ENCODE measurements at regions of chr3 and their contacts with region 1.

Region 1: DNA sequence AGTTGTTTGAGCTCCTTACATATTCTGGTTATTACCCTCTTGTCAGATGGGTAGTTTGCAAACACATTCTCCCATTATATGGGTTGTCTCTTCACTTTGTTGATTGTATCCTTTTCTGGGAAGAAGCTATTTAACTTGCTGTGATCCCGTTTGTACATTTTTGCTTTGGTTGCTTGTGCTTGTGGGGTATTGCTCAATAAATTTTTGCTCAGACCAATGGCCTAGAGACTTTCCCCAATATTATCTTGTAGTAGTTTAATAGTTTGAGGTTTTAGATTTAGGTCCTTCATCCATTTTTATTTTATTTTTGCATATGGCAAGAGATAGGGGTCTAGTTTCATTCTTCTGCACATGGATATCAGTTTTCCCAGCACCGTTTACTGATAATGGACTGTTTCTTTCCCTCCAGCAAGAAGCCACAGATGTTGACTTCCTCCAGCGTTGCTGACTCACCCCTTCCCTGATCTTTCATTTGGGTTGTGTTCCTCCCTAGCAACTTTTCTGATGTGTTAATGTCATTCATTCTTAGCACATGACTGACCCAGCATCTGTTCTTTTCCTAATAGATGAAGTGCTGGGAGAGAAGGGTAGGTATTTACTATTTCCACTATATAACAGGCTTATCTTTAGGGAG is 166.7 kb upstream of the SGO1 start:
- DNase-seq: no peak
- H3K4me3 ChIP-seq: no peak overlapping the region
- H3K27ac ChIP-seq: no peak overlapping the region
- H3K4me1 ChIP-seq: no peaks in the 10 kb centered on the region
- H3K27me3 ChIP-seq: no peaks in the 10 kb centered on the region
- CTCF ChIP-seq: no peak
- EP300 ChIP-seq: no peak
- POLR2A ChIP-seq: no peak

Region 2: DNA sequence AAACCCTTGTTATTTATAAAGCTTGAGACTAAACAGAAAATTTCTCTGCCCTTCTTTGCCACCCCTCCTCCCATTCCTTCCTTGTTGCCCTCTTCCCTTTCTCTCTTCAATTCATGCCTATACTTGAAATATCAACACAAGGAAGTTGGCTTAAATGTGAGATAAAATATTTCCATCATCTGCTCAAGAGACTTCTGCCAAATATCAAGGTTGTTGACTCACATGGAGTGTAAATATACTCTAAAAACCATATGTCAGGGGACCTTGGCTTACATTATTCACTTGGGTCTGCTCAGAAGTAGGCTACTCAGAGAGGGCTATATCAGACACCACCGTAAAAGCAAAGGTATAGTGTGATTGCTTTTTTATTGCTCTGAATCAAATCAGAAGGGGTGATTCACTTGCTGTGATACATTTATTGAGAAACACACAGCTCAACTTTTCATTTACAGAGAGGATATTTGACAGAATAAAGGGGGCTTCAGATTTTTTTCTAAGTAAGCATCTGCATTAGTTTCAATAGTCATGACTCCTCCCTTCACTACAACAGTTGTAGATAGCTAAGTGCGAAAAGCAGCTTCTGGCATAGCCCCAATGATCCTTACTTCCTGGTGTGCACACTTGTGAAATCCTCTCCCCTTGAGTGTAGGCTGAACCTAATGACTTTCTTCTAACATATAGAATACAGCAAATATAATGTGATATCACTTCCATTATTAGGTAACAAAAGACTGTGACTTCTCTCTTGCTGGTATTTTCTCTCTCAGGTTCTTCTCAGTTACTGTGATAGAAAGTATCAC is 804.8 kb before region 1 on chr3:
- in situ Hi-C with region 1: no loop called
- intact Hi-C with region 1: no loop called
- DNase-seq: no peak
- H3K4me3 ChIP-seq: no peak overlapping the region
- H3K27ac ChIP-seq: peak overlapping the region in 2 of 4 donors; percentile 10 to 33
- H3K4me1 ChIP-seq: peaks cover 0 to 10% (median 0%) of the 10 kb centered on the region in 4 donors
- H3K27me3 ChIP-seq: no peaks in the 10 kb centered on the region
- CTCF ChIP-seq: no peak
- EP300 ChIP-seq: no peak
- POLR2A ChIP-seq: no peak

Region 3: DNA sequence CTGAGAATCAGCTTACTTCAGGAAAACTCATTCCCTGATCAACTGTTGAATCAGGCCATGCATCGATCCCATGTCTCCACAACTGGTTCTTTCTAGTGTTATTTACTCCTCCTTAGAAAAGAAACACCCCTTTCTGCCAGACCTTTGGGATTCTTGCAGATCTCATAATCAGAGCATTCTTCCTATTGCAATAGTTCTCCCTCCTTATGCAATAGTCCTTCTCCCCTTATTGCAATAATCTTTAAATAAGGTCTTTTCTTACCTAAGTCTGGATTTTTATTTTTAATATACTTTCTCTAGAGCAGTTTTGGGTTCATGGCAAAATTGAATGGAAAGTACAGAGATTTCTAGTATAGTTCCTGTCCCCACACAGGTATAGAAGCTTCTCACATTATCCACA is 24.8 kb before region 1 on chr3:
- in situ Hi-C with region 1: no loop called
- intact Hi-C with region 1: loop called (anchors 1 kb)
- DNase-seq: no peak
- H3K4me3 ChIP-seq: no peak overlapping the region
- H3K27ac ChIP-seq: no peak overlapping the region
- H3K4me1 ChIP-seq: no peaks in the 10 kb centered on the region
- H3K27me3 ChIP-seq: no peaks in the 10 kb centered on the region
- CTCF ChIP-seq: no peak
- EP300 ChIP-seq: no peak
- POLR2A ChIP-seq: no peak

Region 4: DNA sequence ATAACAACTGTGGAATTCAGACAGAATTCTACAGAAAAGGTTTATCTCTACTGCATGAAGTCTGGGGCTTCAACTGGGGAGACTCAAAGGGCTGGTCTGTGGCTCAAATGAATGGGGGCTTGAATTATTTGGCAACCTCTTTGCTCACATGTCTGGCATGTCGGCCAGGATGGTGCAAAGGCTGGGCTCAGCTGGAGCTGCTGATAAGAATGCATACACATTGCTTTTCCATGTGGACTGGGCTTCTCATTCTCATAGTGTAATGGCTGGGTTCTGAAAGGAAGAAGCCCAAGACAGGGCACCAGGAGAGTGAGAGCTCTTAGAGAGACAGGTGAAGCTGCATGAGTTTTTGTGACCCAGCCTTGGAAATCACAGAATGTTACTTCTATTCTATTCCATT is 27.6 kb after region 1 on chr3:
- in situ Hi-C with region 1: no loop called
- intact Hi-C with region 1: loop called (anchors 1 kb)
- DNase-seq: no peak
- H3K4me3 ChIP-seq: no peak overlapping the region
- H3K27ac ChIP-seq: no peak overlapping the region
- H3K4me1 ChIP-seq: no peaks in the 10 kb centered on the region
- H3K27me3 ChIP-seq: no peaks in the 10 kb centered on the region
- CTCF ChIP-seq: no peak
- EP300 ChIP-seq: no peak
- POLR2A ChIP-seq: no peak

Measured in transverse colon (tissue), 4 donors.